ENCODE measurements at regions of chr10 and their contacts with region 1.

Region 1: DNA sequence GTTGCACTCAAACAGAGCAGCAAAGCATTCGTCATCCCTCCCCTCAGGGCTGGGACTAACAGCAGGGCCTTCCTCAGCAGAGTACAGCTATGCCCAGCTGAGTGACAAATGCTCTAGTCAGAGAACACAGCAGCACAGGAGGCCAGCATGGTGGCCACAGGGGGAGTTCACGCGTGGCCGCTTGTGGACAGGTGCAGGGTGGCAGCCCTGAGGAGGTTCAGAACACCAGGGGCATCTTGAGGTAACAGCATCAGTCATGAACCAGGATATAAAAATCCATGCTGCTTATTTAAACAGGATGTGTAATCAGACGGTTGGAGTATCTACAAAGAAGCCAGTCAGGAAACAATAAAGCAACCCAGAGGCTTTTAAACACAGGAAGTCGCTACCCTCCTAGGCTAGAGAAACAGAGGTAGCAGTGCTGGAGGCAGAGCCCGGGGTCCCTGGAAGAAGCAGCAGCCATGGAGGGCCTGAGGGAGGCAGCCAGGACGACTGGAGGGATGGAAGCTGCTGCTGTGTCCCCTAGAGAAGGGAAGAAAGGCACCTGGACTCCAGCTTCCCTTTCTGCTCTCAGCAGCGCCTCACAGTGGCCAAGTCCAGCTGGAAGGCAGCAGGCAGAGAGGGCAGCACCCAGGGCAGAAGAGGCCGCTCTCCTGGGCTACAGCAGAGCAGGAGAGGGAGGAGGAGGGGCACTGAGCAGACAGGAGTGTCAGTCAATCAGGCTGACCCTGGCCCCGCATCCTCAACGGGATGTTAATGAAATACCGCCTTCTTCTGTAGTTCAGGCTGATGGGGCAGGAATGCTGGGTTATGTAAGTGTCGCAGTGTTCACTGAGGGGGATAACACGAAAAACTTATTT is 70.8 kb upstream of the UCN3 start:
- DNase-seq: peak; percentile 52 to 78 (median 67)
- ATAC-seq: peak; percentile 60
- H3K4me3 ChIP-seq: peak overlapping the region; percentile 58
- H3K4me3 Mint-ChIP-seq: peak overlapping the region; percentile 82 to 100 (median 94)
- H3K27ac ChIP-seq: peak overlapping the region; percentile 71
- H3K27ac Mint-ChIP-seq: peak overlapping the region in 8 of 9 donors; percentile 88 to 100 (median 98)
- H3K4me1 ChIP-seq: peaks cover 47 to 49% of the 10 kb centered on the region in 2 donors
- H3K4me1 Mint-ChIP-seq: peaks cover 61 to 96% (median 80%) of the 10 kb centered on the region in 7 donors
- H3K27me3 ChIP-seq: no peaks in the 10 kb centered on the region
- H3K27me3 Mint-ChIP-seq: no peaks in the 10 kb centered on the region

Region 2: GRCh38 chr10:4561296-4561695 is 732.6 kb before region 1 on chr10:
- CTCF ChIA-PET with region 1: no interaction called
- POLR2A ChIA-PET with region 1: no interaction called
- intact Hi-C with region 1: no loop called
- DNase-seq: no peak
- ATAC-seq: no peak
- H3K4me3 ChIP-seq: no peak overlapping the region
- H3K4me3 Mint-ChIP-seq: no peak overlapping the region
- H3K27ac ChIP-seq: no peak overlapping the region
- H3K27ac Mint-ChIP-seq: no peak overlapping the region
- H3K4me1 ChIP-seq: no peaks in the 10 kb centered on the region
- H3K4me1 Mint-ChIP-seq: peaks cover 0 to 2% (median 0%) of the 10 kb centered on the region in 7 donors
- H3K27me3 ChIP-seq: no peaks in the 10 kb centered on the region
- H3K27me3 Mint-ChIP-seq: peaks cover 8 to 31% (median 23%) of the 10 kb centered on the region in 5 donors

Region 3: DNA sequence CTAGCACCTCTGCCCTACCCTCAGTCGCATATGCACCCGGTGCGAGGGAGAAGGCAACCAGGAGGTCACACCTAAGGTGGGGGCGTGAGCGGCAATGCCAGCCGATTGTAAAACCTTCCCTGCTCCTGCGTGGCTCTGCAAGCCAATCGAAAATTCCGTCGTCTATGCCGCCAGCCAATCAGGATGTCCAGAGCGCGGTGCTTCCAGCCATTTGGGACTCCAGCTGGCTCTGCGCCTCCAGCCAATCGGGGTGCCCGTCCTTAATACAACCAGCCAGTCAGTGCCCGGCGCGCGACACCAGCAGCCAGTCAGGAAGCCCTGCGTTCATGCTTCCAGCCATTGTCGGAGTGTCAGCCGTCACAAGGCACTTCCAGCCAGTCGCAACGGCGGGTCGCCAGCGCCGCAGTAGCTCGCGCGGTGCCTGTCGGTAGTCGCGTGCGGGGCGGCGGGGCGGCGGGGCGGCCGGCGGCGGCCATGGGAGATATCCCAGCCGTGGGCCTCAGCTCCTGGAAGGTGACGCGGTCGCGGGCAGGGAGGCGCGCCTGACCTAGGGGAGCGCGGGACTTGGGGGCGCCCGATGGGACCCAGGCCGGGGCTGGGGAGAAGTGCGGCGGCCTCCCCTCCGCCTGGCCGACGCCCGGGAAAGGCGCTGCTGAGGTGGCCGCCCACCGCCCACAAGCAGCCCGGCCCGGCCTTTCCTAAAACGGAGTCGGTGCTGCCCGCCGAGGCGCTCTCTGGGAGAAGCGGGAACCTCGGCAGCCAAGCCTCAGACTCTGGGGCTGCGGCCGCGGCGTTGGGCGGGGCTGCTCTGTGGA is 467.9 kb before region 1 on chr10 and contains the start of gene AKR1E2:
- CTCF ChIA-PET with region 1: no interaction called
- POLR2A ChIA-PET with region 1: interaction called, 3 read pairs
- intact Hi-C with region 1: loop called in 1 of 2 experiments (anchors 5 kb)
- DNase-seq: peak; percentile 56 to 91 (median 83)
- ATAC-seq: peak; percentile 93
- H3K4me3 ChIP-seq: peak within 1 kb of the TSS; percentile 10
- H3K4me3 Mint-ChIP-seq: peak within 1 kb of the TSS; percentile 61 to 89 (median 84)
- H3K27ac ChIP-seq: peak within 1 kb of the TSS; percentile 72
- H3K27ac Mint-ChIP-seq: peak within 1 kb of the TSS; percentile 12 to 94 (median 85)
- H3K4me1 ChIP-seq: peaks cover 2 to 6% of the 10 kb centered on the region in 2 donors
- H3K4me1 Mint-ChIP-seq: peaks cover 9 to 43% (median 29%) of the 10 kb centered on the region in 7 donors
- H3K27me3 ChIP-seq: peaks cover 0 to 3% of the 10 kb centered on the region in 2 donors
- H3K27me3 Mint-ChIP-seq: peaks cover 0 to 56% (median 31%) of the 10 kb centered on the region in 5 donors
- total RNA-seq, gene AKR1E2: 8.6 to 26.0 (median 25.1) TPM

Region 4: DNA sequence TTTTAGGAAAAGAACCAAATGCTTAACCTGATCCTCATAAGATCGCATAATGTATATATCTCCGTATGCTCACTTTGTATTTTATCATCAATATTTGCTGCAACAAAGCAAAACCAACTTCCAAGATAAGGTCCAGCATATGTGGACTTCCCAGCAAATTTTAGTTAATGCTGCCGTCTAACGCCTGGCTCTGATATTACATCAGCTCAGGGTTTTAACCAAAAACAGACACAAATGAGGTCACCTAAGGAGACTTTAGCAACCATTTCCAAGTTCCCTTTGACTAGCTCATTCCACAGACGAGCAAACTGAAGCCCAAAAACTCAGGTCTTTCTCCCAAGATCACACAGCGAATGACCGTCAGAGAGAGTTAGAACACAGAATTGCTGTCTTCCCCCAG is 11.5 kb after region 1 on chr10:
- CTCF ChIA-PET with region 1: interaction called, 5 read pairs
- POLR2A ChIA-PET with region 1: interaction called, 23 read pairs
- intact Hi-C with region 1: no loop called
- DNase-seq: no peak
- ATAC-seq: no peak
- H3K4me3 ChIP-seq: no peak overlapping the region
- H3K4me3 Mint-ChIP-seq: no peak overlapping the region
- H3K27ac ChIP-seq: no peak overlapping the region
- H3K27ac Mint-ChIP-seq: no peak overlapping the region
- H3K4me1 ChIP-seq: no peaks in the 10 kb centered on the region
- H3K4me1 Mint-ChIP-seq: peaks cover 3 to 33% (median 13%) of the 10 kb centered on the region in 7 donors
- H3K27me3 ChIP-seq: no peaks in the 10 kb centered on the region
- H3K27me3 Mint-ChIP-seq: peaks cover 0 to 37% (median 0%) of the 10 kb centered on the region in 5 donors

Region 5: GRCh38 chr10:5343562-5343961 is 49.6 kb after region 1 on chr10:
- CTCF ChIA-PET with region 1: interaction called, 5 read pairs
- POLR2A ChIA-PET with region 1: interaction called, 6 read pairs
- intact Hi-C with region 1: loop called in 1 of 2 experiments (anchors 1 kb)
- DNase-seq: peak in 3 of 9 donors; percentile 5 to 18 (median 12)
- ATAC-seq: peak; percentile 44
- H3K4me3 ChIP-seq: no peak overlapping the region
- H3K4me3 Mint-ChIP-seq: no peak overlapping the region
- H3K27ac ChIP-seq: no peak overlapping the region
- H3K27ac Mint-ChIP-seq: no peak overlapping the region
- H3K4me1 ChIP-seq: no peaks in the 10 kb centered on the region
- H3K4me1 Mint-ChIP-seq: peaks cover 0 to 7% (median 4%) of the 10 kb centered on the region in 7 donors
- H3K27me3 ChIP-seq: no peaks in the 10 kb centered on the region
- H3K27me3 Mint-ChIP-seq: peaks cover 0 to 11% (median 0%) of the 10 kb centered on the region in 5 donors

Region 6: GRCh38 chr10:7275761-7276440 is 1982.0 kb after region 1 on chr10:
- CTCF ChIA-PET with region 1: no interaction called
- POLR2A ChIA-PET with region 1: no interaction called
- intact Hi-C with region 1: loop called in 1 of 2 experiments (anchors 10 kb)
- DNase-seq: no peak
- ATAC-seq: no peak
- H3K4me3 ChIP-seq: no peak overlapping the region
- H3K4me3 Mint-ChIP-seq: no peak overlapping the region
- H3K27ac ChIP-seq: no peak overlapping the region
- H3K27ac Mint-ChIP-seq: peak overlapping the region; percentile 15 to 86 (median 65)
- H3K4me1 ChIP-seq: peaks cover 11 to 30% of the 10 kb centered on the region in 2 donors
- H3K4me1 Mint-ChIP-seq: peaks cover 46 to 92% (median 85%) of the 10 kb centered on the region in 7 donors
- H3K27me3 ChIP-seq: no peaks in the 10 kb centered on the region
- H3K27me3 Mint-ChIP-seq: no peaks in the 10 kb centered on the region